ENCODE measurements at regions of chr12 and their contacts with region 1.

Region 1: DNA sequence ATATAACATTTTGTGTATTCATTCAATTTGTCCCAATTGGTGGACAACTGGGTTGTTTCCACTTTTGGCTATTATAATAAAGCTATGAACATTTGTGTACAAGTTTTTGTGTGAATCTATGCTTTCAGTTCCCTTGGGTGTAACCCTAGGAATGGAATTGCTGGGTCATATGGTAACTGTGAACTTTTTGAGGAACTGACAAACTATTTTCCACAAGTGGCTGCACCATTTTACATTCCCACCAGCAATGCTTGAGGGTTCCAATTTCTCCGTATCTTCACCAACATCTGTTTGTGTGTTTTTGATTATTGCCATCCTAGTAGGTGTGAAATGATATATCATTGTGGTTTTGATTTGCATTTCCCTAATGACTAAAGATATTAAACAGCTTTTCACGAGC is 13.0 kb downstream of the LPCAT3 start:
- DNase-seq: no peak
- H3K4me3 ChIP-seq: no peak overlapping the region
- H3K27me3 ChIP-seq: no peaks in the 10 kb centered on the region
- CTCF ChIP-seq: no peak

Region 2: GRCh38 chr12:6723607-6724396 is 281.5 kb before region 1 on chr12 and contains the start of gene COPS7A:
- CTCF ChIA-PET with region 1: no interaction called
- POLR2A ChIA-PET with region 1: no interaction called
- DNase-seq: peak; percentile 93
- H3K4me3 ChIP-seq: peak within 1 kb of the TSS; percentile 52
- H3K27me3 ChIP-seq: no peaks in the 10 kb centered on the region
- CTCF ChIP-seq: no peak
- polyA plus RNA-seq, gene COPS7A: 128 and 200 TPM in 2 replicates

Region 3: DNA sequence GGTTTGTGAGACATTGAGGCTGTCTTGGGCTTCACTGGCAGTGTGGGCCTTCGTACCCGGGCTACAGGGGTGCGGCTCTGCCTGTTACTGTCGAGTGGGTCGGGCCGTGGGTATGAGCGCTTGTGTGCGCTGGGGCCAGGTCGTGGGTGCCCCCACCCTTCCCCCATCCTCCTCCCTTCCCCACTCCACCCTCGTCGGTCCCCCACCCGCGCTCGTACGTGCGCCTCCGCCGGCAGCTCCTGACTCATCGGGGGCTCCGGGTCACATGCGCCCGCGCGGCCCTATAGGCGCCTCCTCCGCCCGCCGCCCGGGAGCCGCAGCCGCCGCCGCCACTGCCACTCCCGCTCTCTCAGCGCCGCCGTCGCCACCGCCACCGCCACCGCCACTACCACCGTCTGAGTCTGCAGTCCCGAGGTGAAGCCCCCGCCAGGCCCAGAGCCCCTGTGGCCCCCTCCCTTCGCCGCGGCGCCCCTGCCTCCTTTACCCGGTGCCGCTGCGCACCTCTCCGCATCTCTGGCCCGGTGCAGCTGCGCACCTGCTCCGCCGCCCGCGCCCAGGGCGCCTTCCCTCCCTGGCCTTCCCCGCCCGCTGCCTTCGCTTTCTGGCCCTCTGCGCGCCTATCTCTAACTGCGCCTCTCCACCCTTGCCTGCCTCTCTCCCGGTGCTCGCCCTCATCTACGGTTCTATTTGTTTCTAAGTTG is 90.9 kb before region 1 on chr12 and contains the start of gene ENO2:
- CTCF ChIA-PET with region 1: no interaction called
- POLR2A ChIA-PET with region 1: no interaction called
- DNase-seq: no peak
- H3K4me3 ChIP-seq: peak within 1 kb of the TSS; percentile 91
- H3K27me3 ChIP-seq: no peaks in the 10 kb centered on the region
- CTCF ChIP-seq: no peak
- polyA plus RNA-seq, gene ENO2: 27.9 and 29.7 TPM in 2 replicates

Region 4: GRCh38 chr12:7018350-7019042 is 13.2 kb after region 1 on chr12 and contains the start of gene LPCAT3:
- CTCF ChIA-PET with region 1: interaction called, 10 read pairs
- POLR2A ChIA-PET with region 1: no interaction called
- DNase-seq: peak; percentile 72
- H3K4me3 ChIP-seq: peak within 1 kb of the TSS; percentile 76
- H3K27me3 ChIP-seq: no peaks in the 10 kb centered on the region
- CTCF ChIP-seq: peak; percentile 88
- polyA plus RNA-seq, gene LPCAT3: 26.3 and 31.2 TPM in 2 replicates

Region 5: GRCh38 chr12:7221486-7221885 is 216.2 kb after region 1 on chr12:
- CTCF ChIA-PET with region 1: no interaction called
- POLR2A ChIA-PET with region 1: no interaction called
- DNase-seq: no peak
- H3K4me3 ChIP-seq: no peak overlapping the region
- H3K27me3 ChIP-seq: peaks cover 3% of the 10 kb centered on the region; the same call in 1 of the 2 replicates
- CTCF ChIP-seq: no peak

Region 6: GRCh38 chr12:7542813-7543498 is 537.6 kb after region 1 on chr12:
- CTCF ChIA-PET with region 1: no interaction called
- POLR2A ChIA-PET with region 1: no interaction called
- DNase-seq: peak; percentile 41
- H3K4me3 ChIP-seq: no peak overlapping the region
- H3K27me3 ChIP-seq: no peaks in the 10 kb centered on the region
- CTCF ChIP-seq: no peak

Measured in BJ (cell line).